Right ventricle myocardium inferior (tissue), 1 donor: ENCODE measurements at regions of chr14 and their contacts with region 1.

Region 1: GRCh38 chr14:23588884-23589598 is 10.5 kb upstream of the JPH4 start:
- DNase-seq: peak; percentile 91
- ATAC-seq: peak; percentile 83

Region 2: GRCh38 chr14:23631702-23632460 is 42.8 kb after region 1 on chr14:
- intact Hi-C with region 1: loop called (anchors 2 kb)
- DNase-seq: no peak
- ATAC-seq: peak; percentile 90